H1 (cell line): ENCODE measurements at regions of chr12 and their contacts with region 1.

Region 1: DNA sequence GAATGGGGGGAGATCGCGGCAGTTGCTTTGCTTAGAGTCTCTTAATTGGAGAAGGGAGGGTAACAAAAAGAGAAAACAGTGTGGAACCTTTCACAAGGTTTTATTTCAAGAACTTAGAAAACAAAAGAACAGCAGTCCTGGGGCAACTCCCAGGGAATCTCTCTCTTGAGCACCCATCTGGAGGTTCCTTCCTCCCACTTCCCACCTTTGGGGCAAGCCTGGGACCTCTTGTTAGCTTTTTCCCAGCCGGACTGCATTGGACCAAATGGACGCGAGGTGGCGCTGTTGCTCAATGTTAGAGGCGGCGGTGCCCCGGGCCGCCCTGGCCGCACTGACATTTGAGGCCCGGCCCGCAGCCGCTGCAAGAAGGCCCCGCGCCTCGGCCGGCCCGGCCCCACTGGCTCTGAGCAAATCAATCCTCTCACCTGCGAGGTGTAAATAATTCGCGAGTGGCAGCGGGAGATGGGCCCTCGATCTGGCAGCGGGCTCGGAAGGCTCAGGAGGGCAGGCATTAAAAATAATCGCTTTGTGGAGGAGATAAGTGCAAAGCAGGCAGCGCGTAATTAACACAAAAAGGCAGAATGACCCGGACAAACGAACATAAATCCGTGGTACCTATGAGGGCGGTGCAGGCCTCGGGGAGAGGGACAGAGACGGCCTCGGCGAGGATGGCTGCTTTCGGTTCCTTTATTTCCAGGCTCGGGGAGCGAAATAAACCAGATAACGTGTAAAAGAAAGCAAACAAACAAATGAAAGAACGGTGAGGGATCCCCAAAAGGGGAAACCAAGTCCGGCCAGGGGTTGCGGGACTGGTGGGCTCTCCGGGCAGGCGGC is 2.7 kb upstream of the HOXC8 start:
- DNase-seq: peak; percentile 50 to 98
- H3K4me3 ChIP-seq: no peak overlapping the region
- H3K27ac ChIP-seq: no peak overlapping the region
- H3K4me1 ChIP-seq: peaks cover 0 to 4% (median 0%) of the 10 kb centered on the region in 4 experiments; a peak in 2 of 7 replicates
- H3K27me3 ChIP-seq: peaks cover 97 to 100% (median 100%) of the 10 kb centered on the region in 4 experiments
- CTCF ChIP-seq: peak; percentile 88 to 97 (median 89)
- EP300 ChIP-seq: no peak
- POLR2A ChIP-seq: no peak
- RAD21 ChIP-seq: peak; percentile 98

Region 2: DNA sequence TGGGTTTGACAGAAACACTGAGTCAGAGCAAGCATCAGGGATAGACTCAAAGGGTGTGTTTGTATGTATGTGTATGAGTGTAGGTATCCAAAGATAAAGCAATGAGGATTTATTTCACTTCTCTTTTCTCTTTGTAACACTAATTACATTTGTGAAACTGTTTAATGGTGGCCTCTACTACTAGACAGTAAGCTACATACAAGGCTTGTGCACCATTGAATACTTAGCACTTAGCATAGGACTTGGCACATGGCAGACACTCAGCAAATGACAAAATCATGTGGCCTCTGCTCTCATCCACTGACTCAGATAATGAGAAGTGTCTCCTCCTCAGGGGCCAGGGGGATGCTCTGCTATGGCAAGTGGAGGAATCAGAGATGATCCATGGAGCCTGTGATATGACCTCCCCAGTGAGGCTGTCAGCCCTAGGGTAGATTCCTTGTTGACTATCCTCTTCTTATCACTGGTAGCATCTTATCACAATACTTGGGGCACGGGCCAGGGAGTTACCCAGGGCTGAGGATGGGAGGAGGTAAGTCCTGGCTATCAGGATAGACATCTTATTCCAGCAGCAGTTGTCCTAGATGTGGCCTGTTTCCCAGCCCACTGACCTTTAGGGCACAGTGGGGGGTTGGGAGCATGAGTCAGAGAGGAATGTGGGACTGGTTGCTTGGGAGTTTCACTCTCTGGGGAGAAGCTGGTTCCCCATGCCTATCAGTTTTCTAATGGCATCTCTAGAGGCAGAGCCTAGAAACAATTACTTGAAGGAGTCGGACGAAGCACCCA is 138.7 kb before region 1 on chr12:
- CTCF ChIA-PET with region 1: no interaction called
- POLR2A ChIA-PET with region 1: no interaction called
- DNase-seq: no peak
- H3K4me3 ChIP-seq: no peak overlapping the region
- H3K27ac ChIP-seq: no peak overlapping the region
- H3K4me1 ChIP-seq: 0 out of 7 replicates have a peak, but pooled peaks cover 0 to 1% (median 0%) of the 10 kb centered on the region in 4 experiments
- H3K27me3 ChIP-seq: no peaks in the 10 kb centered on the region; a peak in 3 of 7 replicates
- CTCF ChIP-seq: no peak
- EP300 ChIP-seq: peak in 1 of 2 experiments; percentile 19; a peak in 1 of 3 replicates
- POLR2A ChIP-seq: no peak
- RAD21 ChIP-seq: no peak

Region 3: DNA sequence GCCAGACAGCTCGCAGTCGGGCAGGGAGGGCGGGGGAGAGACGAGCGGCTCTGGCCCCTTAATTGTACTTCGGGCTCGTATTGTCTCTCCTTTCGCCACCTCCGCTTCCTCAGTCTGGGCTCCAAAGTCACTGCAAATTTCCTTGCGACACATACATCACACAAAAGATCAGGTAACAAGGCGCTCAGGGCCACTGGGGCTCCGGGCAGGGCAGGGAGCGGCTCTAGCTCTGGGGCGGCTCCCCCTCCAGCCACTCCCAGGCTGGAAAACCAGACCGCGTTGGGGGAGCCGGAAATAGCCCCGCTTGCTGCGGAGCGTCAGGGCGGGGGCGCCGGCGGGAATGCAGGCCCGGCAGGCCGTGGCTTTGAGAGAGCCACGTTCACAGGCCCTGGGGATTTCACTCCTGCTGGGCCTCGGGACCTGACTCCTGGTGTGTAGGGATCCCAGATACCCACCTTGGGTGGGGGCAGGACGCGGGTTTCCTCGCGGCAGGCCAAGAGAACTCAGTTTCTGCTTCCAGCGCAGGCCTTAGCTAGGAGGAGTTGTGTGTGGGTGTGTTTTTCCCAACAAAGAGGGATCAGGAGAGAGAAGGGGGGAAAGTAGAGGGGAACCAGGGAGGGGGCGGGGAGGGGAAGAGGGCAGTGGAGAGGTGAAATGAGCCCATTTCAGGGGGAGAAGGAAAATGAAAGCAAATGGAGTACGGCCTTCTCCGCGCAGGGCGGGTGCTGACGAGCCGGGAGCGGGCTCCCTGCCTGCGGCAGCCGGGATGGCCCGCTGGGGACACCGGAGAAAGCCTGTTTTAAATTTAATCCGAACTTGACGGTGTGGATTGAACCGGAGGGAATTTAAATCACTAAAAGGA is 10.5 kb before region 1 on chr12:
- CTCF ChIA-PET with region 1: interaction called, 24 read pairs
- POLR2A ChIA-PET with region 1: interaction called, 8 read pairs
- DNase-seq: peak in 1 of 2 experiments; percentile 80
- H3K4me3 ChIP-seq: peak overlapping the region in 1 of 4 experiments; percentile 45; a peak in 3 of 8 replicates
- H3K27ac ChIP-seq: no peak overlapping the region
- H3K4me1 ChIP-seq: peaks cover 0 to 17% (median 8%) of the 10 kb centered on the region in 4 experiments; a peak in 5 of 7 replicates
- H3K27me3 ChIP-seq: peaks cover 97 to 100% (median 100%) of the 10 kb centered on the region in 4 experiments
- CTCF ChIP-seq: no peak
- EP300 ChIP-seq: no peak
- POLR2A ChIP-seq: no peak
- RAD21 ChIP-seq: no peak

Region 4: DNA sequence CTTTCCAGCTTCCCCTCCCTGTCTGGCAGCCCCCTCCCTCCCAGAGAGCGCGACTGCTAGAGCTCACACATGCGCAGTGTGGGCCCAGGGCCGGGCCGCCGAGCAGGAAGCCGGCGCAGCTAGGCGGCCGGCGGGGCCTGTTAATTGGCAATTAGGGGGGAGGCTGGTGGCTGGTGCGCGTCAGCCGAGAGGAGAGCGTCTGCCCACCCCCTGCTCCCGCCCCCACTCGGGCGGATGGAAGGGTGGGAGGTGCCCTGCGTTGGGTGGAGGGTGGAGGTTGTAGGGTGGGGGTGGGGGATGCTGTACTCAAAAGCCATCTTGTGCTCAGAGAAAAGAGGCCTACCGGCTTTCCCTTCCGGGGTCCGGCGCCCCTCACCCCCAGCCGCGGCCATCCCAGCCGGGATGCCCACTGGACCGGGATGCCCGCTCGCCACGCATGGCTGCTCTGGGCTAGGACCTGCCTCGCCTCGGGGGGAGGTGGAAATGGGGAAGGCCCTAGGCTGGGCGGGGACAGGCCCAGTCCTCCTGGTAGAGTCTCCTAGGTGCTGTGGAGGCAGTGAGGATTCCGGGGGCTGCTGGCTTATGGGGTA is 11.9 kb after region 1 on chr12:
- CTCF ChIA-PET with region 1: interaction called, 172 read pairs
- POLR2A ChIA-PET with region 1: interaction called, 3 read pairs
- DNase-seq: peak in 1 of 2 experiments; percentile 83
- H3K4me3 ChIP-seq: peak overlapping the region in 3 of 4 experiments; percentile 9 to 54 (median 26); a peak in 5 of 8 replicates
- H3K27ac ChIP-seq: no peak overlapping the region
- H3K4me1 ChIP-seq: peaks cover 0 to 12% (median 4%) of the 10 kb centered on the region in 4 experiments; a peak in 6 of 7 replicates
- H3K27me3 ChIP-seq: peaks cover 95 to 100% (median 100%) of the 10 kb centered on the region in 4 experiments
- CTCF ChIP-seq: no peak
- EP300 ChIP-seq: no peak
- POLR2A ChIP-seq: no peak
- RAD21 ChIP-seq: no peak

Region 5: GRCh38 chr12:54071942-54072341 is 65.9 kb after region 1 on chr12:
- CTCF ChIA-PET with region 1: no interaction called
- POLR2A ChIA-PET with region 1: no interaction called
- DNase-seq: no peak
- H3K4me3 ChIP-seq: no peak overlapping the region
- H3K27ac ChIP-seq: no peak overlapping the region
- H3K4me1 ChIP-seq: peaks cover 4 to 10% (median 8%) of the 10 kb centered on the region in 4 experiments; a peak in 6 of 7 replicates
- H3K27me3 ChIP-seq: peaks cover 10 to 48% (median 32%) of the 10 kb centered on the region in 4 experiments
- CTCF ChIP-seq: no peak
- EP300 ChIP-seq: no peak
- POLR2A ChIP-seq: no peak
- RAD21 ChIP-seq: no peak

Region 6: DNA sequence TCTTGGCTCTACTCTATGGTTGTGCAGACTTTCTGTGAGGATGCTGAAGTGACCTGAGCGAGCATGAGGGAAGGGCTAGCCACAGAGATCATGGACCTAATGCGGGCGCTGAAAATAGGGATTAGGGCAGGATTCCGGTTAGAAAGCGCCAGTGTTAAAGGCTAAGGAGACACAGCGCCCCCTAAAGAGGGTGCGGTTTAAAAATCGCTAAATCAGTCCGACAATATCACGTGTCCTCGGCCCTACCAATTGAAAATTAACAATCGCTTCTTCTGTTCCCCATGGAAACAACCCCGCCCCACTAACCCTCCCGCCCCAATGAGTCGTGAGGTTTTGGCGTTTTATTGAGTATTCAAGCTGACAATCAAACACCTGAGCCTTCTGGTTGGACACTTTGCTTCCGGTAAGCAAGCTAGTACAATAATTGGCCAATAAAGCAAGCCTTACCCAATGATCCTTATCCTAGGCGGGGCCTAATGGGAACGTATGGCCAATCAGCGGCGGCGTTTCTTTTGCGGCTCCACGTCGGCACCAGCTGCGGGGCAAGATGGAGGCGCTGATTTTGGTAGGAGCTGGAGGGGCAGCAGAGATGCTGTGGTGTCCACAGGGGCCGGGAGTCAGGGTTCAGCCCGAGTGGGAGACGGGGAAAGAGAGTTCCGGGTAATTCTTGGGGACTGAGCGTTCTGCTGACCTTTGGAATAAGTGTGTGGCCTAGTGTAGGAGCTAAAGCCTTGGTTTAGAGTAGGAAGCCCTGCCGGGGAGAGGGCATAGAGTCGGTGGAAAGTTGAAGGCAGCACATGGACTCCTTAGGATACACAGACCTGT is 318.8 kb after region 1 on chr12 and contains the start of gene COPZ1:
- CTCF ChIA-PET with region 1: no interaction called
- POLR2A ChIA-PET with region 1: no interaction called
- DNase-seq: peak; percentile 87 to 97
- H3K4me3 ChIP-seq: peak within 1 kb of the TSS; percentile 79 to 97 (median 88)
- H3K27ac ChIP-seq: peak within 1 kb of the TSS; percentile 83
- H3K4me1 ChIP-seq: peaks cover 0 to 10% (median 4%) of the 10 kb centered on the region in 4 experiments; a peak in 2 of 7 replicates
- H3K27me3 ChIP-seq: no peaks in the 10 kb centered on the region
- CTCF ChIP-seq: peak; percentile 57 to 89 (median 81)
- EP300 ChIP-seq: no peak
- POLR2A ChIP-seq: peak; percentile 54 to 87
- RAD21 ChIP-seq: peak; percentile 80 to 82
- total RNA-seq, gene COPZ1: 94.2 and 103 TPM in 2 replicates